CD8-positive, alpha-beta T cell (primary cell): ENCODE measurements at regions of chr5 and their contacts with region 1.

Region 1: GRCh38 chr5:157948738-157949410 is 89.9 kb upstream of the CLINT1 start:
- DNase-seq: peak; percentile 62 to 85 (median 77)
- ATAC-seq: peak; percentile 95
- H3K4me3 ChIP-seq: no peak overlapping the region
- H3K4me3 Mint-ChIP-seq: peak overlapping the region; percentile 0
- H3K27ac ChIP-seq: no peak overlapping the region
- H3K27ac Mint-ChIP-seq: no peak overlapping the region
- H3K4me1 ChIP-seq: no peaks in the 10 kb centered on the region
- H3K4me1 Mint-ChIP-seq: peaks cover 5% of the 10 kb centered on the region
- H3K27me3 ChIP-seq: no peaks in the 10 kb centered on the region
- H3K27me3 Mint-ChIP-seq: peaks cover 11% of the 10 kb centered on the region
- CTCF ChIP-seq: peak; percentile 67

Region 2: DNA sequence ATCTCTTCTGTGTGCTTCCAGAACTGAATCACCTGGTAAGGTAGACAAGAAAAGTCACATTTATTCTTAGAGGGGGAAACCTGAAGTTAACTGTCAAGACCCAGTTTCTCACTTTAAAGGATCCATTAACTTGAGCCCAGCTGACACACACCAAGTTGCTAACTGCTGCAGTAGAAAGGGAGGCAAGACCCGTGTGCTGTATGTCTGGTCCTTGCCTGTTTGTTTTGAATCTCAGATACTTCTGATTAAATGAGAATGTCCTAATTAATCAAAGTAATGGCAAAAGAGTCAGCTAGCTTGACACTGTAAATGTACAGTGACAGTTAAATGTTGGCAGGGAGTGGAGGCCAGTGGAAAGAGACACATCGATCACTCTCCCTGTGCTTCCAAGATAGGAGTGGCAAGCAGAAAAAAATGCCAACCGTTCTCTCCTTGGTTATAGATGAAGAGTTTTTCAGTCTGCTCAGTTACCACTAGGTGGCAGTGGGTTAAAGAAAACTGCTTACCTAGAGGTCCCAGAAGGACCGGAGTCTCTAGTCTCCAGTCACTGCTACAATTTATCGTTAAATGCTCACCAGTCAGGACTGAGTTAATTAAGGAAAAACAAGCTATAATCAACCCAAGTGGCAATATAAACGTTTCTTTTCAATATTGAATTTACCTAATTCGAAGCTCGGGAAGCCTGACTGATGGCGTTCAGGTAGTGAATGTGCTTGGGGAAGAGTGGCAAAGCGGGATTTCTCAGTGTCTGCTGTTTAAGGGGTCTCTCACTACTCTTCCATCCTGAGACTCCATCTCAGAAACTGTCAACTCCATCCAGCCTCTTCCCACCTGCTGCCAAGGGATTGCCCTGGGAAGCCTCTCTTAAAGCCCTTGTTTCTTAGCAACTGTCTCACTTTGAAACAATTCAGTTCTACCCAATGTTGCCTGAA is 186.9 kb before region 1 on chr5:
- CTCF ChIA-PET with region 1: interaction called, 10 read pairs
- POLR2A ChIA-PET with region 1: no interaction called
- intact Hi-C with region 1: loop called in 1 of 2 experiments (anchors 1 kb)
- DNase-seq: peak in 3 of 9 experiments; percentile 18 to 62 (median 54)
- ATAC-seq: peak; percentile 84
- H3K4me3 ChIP-seq: no peak overlapping the region
- H3K4me3 Mint-ChIP-seq: no peak overlapping the region
- H3K27ac ChIP-seq: no peak overlapping the region
- H3K27ac Mint-ChIP-seq: no peak overlapping the region
- H3K4me1 ChIP-seq: no peaks in the 10 kb centered on the region
- H3K4me1 Mint-ChIP-seq: peaks cover 4% of the 10 kb centered on the region
- H3K27me3 ChIP-seq: no peaks in the 10 kb centered on the region
- H3K27me3 Mint-ChIP-seq: no peaks in the 10 kb centered on the region
- CTCF ChIP-seq: peak; percentile 77

Region 3: DNA sequence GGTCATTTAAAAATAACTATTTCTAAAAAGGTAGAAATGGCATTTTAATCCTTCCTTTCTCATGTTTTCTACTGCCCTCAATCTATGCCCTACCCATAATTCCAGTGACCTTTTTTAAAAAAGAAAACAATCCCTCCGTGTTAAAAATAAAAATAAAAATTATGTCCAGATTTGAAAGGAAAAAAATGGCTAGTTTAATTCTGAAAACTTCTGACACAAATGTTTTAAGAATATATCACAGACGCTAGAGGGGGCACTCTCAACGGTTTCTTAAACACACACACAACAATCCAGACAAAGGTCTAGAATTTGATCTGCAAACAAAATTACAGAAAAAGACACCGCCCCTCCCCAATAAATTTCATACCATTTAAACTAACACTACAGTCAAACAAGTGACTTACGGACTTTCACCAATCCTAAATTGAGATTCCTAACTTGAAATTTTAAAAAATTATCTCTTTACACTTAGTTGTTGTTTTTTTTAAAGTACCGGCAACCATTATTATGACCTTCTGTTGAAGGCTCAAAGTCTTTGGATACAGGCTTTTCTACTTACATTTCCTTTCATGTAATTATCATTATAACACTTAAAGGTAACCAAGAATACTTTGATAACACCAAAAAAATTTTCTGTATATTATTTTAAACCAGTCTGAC is 128.2 kb before region 1 on chr5:
- CTCF ChIA-PET with region 1: interaction called, 64 read pairs
- POLR2A ChIA-PET with region 1: no interaction called
- intact Hi-C with region 1: loop called (anchors 1 kb)
- DNase-seq: peak in 3 of 9 experiments; percentile 15 to 62 (median 48)
- ATAC-seq: no peak
- H3K4me3 ChIP-seq: no peak overlapping the region
- H3K4me3 Mint-ChIP-seq: no peak overlapping the region
- H3K27ac ChIP-seq: no peak overlapping the region
- H3K27ac Mint-ChIP-seq: no peak overlapping the region
- H3K4me1 ChIP-seq: no peaks in the 10 kb centered on the region
- H3K4me1 Mint-ChIP-seq: peaks cover 34% of the 10 kb centered on the region
- H3K27me3 ChIP-seq: no peaks in the 10 kb centered on the region
- H3K27me3 Mint-ChIP-seq: no peaks in the 10 kb centered on the region
- CTCF ChIP-seq: peak; percentile 26

Region 4: GRCh38 chr5:157917899-157918809 is 30.7 kb before region 1 on chr5:
- CTCF ChIA-PET with region 1: interaction called, 13 read pairs
- POLR2A ChIA-PET with region 1: no interaction called
- intact Hi-C with region 1: no loop called
- DNase-seq: peak; percentile 1 to 64 (median 54)
- ATAC-seq: no peak
- H3K4me3 ChIP-seq: no peak overlapping the region
- H3K4me3 Mint-ChIP-seq: no peak overlapping the region
- H3K27ac ChIP-seq: no peak overlapping the region
- H3K27ac Mint-ChIP-seq: peak overlapping the region; percentile 33
- H3K4me1 ChIP-seq: peaks cover 17% of the 10 kb centered on the region
- H3K4me1 Mint-ChIP-seq: peaks cover 28% of the 10 kb centered on the region
- H3K27me3 ChIP-seq: no peaks in the 10 kb centered on the region
- H3K27me3 Mint-ChIP-seq: no peaks in the 10 kb centered on the region
- CTCF ChIP-seq: peak; percentile 25

Region 5: GRCh38 chr5:157961828-157962590 is 13.1 kb after region 1 on chr5:
- CTCF ChIA-PET with region 1: interaction called, 12 read pairs
- POLR2A ChIA-PET with region 1: interaction called, 3 read pairs
- intact Hi-C with region 1: no loop called
- DNase-seq: no peak
- ATAC-seq: no peak
- H3K4me3 ChIP-seq: no peak overlapping the region
- H3K4me3 Mint-ChIP-seq: no peak overlapping the region
- H3K27ac ChIP-seq: no peak overlapping the region
- H3K27ac Mint-ChIP-seq: no peak overlapping the region
- H3K4me1 ChIP-seq: no peaks in the 10 kb centered on the region
- H3K4me1 Mint-ChIP-seq: no peaks in the 10 kb centered on the region
- H3K27me3 ChIP-seq: no peaks in the 10 kb centered on the region
- H3K27me3 Mint-ChIP-seq: peaks cover 2% of the 10 kb centered on the region
- CTCF ChIP-seq: no peak